HepG2 (cell line): ENCODE measurements at regions of chr16 and their contacts with region 1.

Region 1: DNA sequence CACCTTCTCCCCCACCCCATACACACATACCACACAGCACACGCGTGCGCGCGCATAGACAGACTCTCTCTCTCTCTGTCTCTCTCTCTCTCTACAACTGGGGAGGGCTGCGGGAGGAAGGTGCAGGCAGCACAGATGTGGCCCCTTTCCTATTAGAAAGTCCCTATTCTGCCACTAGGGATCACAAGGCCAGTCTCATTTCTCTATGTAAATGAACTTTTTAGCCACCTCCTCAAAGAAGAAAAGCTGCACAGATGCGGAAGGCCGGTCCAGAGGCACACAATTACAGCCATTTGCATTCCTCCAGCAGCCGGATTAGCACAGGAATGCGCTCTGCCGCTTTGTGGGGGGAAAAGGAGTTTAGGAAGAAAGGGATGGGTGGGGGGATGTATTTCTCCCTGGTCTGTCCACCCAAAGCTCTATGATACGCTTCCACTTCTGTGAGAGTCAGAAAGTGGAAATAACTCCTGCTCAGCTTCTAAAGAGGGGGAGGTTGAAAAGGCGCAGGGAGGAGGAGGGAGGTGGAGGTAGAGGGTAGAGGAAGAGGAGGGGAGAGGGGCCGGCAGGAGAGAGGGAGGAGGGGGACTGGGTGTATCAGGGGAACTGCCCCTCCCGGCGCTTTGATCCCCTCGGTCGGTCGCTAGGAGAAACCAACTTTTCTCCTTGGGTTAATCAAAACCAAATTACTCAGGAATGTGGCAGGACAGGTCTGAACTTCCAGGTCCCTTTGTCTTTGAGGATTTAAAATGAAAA is 11.7 kb downstream of the ZFHX3 start:
- DNase-seq: no peak
- ATAC-seq: no peak
- H3K4me3 ChIP-seq: no peak overlapping the region
- H3K27ac ChIP-seq: peak overlapping the region; percentile 84
- H3K4me1 ChIP-seq: peaks cover 97% of the 10 kb centered on the region
- H3K27me3 ChIP-seq: no peaks in the 10 kb centered on the region
- CTCF ChIP-seq: no peak
- EP300 ChIP-seq: no peak
- POLR2A ChIP-seq: no peak
- RAD21 ChIP-seq: no peak

Region 2: DNA sequence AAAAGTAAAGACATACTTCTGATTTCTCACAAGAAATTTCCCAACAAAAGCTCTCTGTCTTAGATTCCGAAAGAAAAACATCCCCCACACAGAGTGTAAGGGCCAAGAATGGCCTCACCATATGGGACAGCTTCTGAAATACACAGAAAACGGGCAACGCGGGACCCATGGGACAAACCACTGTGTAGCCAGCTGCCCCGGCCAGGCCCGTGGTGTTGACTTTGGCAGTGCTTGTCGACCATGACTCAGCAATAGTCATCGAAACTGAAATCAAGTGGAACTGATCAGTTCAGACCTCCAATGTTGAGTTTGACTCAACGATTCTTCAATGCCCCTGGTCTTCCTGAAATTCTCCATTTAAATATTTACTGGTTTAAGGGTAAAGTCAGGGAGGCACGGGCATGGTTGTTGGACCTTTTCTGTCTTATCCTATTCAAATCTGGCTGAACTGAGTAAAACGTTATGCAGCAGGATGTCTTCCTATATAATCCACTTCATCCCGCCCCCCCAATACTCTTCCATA is 15.8 kb before region 1 on chr16:
- CTCF ChIA-PET with region 1: no interaction called
- POLR2A ChIA-PET with region 1: interaction called, 13 read pairs
- in situ Hi-C with region 1: no loop called
- intact Hi-C with region 1: no loop called
- DNase-seq: peak; percentile 92
- ATAC-seq: peak; percentile 78
- H3K4me3 ChIP-seq: peak overlapping the region in 2 of 3 experiments; percentile 18 to 24; a peak in 1 of 6 replicates
- H3K27ac ChIP-seq: peak overlapping the region; percentile 70
- H3K4me1 ChIP-seq: peaks cover 94% of the 10 kb centered on the region
- H3K27me3 ChIP-seq: no peaks in the 10 kb centered on the region
- CTCF ChIP-seq: no peak
- EP300 ChIP-seq: peak; percentile 69 to 87; a peak in 3 of 4 replicates
- POLR2A ChIP-seq: peak in 1 of 2 experiments; percentile 32; a peak in 1 of 4 replicates
- RAD21 ChIP-seq: no peak; the same call in 1 of the 2 replicates

Region 3: GRCh38 chr16:73058221-73058615 is 22.0 kb after region 1 on chr16:
- CTCF ChIA-PET with region 1: no interaction called
- POLR2A ChIA-PET with region 1: interaction called, 36 read pairs
- in situ Hi-C with region 1: no loop called
- intact Hi-C with region 1: no loop called
- DNase-seq: no peak
- ATAC-seq: no peak
- H3K4me3 ChIP-seq: peak overlapping the region; percentile 75 to 78 (median 77); a peak in 4 of 6 replicates
- H3K27ac ChIP-seq: peak overlapping the region; percentile 57
- H3K4me1 ChIP-seq: peaks cover 53% of the 10 kb centered on the region
- H3K27me3 ChIP-seq: no peaks in the 10 kb centered on the region
- CTCF ChIP-seq: no peak
- EP300 ChIP-seq: no peak
- POLR2A ChIP-seq: no peak
- RAD21 ChIP-seq: peak; percentile 26; the same call in 1 of the 2 replicates

Region 4: GRCh38 chr16:73122604-73123391 is 86.5 kb after region 1 on chr16:
- CTCF ChIA-PET with region 1: no interaction called
- POLR2A ChIA-PET with region 1: no interaction called
- in situ Hi-C with region 1: no loop called
- intact Hi-C with region 1: no loop called
- DNase-seq: no peak
- ATAC-seq: no peak
- H3K4me3 ChIP-seq: no peak overlapping the region; a peak in 1 of 6 replicates
- H3K27ac ChIP-seq: no peak overlapping the region
- H3K4me1 ChIP-seq: peaks cover 14% of the 10 kb centered on the region
- H3K27me3 ChIP-seq: no peaks in the 10 kb centered on the region; a peak in 1 of 5 replicates
- CTCF ChIP-seq: no peak
- EP300 ChIP-seq: no peak
- POLR2A ChIP-seq: no peak
- RAD21 ChIP-seq: no peak